HCT116 (cell line): ENCODE measurements at regions of chr6 and their contacts with region 1.

Region 1: DNA sequence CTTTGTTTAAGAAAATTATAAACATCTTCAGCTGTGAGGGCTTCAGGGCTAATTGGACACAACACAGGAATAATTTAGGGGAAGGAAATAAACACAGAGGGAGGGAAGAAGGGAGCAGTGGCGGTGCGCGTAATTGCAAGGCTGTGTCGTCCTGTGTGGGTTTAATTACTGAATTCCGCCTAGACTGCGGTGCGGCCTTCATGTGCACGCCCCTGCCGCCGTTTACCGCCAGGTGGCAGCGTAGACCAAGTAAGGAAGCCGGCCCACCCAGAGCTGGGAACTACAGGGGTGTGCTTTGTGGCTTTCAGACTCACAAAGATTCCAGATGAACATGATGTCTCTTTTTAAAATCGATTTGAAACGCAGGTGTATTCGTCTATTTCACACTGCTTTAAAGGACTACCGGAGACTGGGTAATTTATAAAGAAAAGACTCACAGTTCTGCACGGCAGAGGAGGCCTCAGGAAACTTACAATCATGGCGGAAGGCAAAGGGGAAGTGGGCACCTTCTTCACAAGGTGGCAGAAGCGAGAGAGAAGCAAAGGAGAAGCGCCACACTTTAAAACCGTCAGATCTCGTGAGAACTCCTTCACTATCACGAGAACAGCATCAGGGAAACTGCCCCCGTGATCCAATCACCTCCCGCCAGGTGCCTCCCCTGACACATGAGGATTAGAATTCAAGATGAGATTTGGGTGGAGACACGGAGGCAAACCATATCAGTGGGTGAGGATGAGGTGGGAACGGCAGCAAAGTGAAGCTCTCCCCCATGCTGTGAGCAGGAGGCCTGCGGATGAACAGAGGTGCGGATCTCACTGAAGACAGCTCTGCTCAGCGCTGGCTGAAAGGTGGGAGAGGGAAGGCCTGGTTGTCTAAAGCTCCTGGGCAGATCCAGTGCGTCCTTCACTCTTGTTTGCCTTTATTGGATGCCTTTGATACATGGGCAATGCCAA is 222.0 kb upstream of the PDE10A start:
- DNase-seq: peak; percentile 51
- ATAC-seq: peak; percentile 97
- H3K4me3 ChIP-seq: no peak overlapping the region
- H3K27ac ChIP-seq: no peak overlapping the region
- H3K4me1 ChIP-seq: peaks cover 0 to 6% of the 10 kb centered on the region in 2 experiments; a peak in 1 of 4 replicates
- H3K27me3 ChIP-seq: no peaks in the 10 kb centered on the region
- CTCF ChIP-seq: peak; percentile 79 to 92 (median 79); a peak in 5 of 6 replicates
- POLR2A ChIP-seq: no peak
- RAD21 ChIP-seq: peak; percentile 87

Region 2: GRCh38 chr6:166097915-166098522 is 212.9 kb after region 1 on chr6:
- CTCF ChIA-PET with region 1: interaction called, 24 read pairs
- POLR2A ChIA-PET with region 1: no interaction called
- RAD21 ChIA-PET with region 1: no interaction called
- intact Hi-C with region 1: loop called (anchors 1 kb)
- DNase-seq: peak; percentile 49
- ATAC-seq: peak; percentile 97
- H3K4me3 ChIP-seq: peak overlapping the region; percentile 29 to 54
- H3K27ac ChIP-seq: no peak overlapping the region
- H3K4me1 ChIP-seq: peaks cover 0 to 6% of the 10 kb centered on the region in 2 experiments; a peak in 1 of 4 replicates
- H3K27me3 ChIP-seq: no peaks in the 10 kb centered on the region
- CTCF ChIP-seq: peak; percentile 64 to 97 (median 89)
- POLR2A ChIP-seq: no peak
- RAD21 ChIP-seq: peak; percentile 66

Region 3: DNA sequence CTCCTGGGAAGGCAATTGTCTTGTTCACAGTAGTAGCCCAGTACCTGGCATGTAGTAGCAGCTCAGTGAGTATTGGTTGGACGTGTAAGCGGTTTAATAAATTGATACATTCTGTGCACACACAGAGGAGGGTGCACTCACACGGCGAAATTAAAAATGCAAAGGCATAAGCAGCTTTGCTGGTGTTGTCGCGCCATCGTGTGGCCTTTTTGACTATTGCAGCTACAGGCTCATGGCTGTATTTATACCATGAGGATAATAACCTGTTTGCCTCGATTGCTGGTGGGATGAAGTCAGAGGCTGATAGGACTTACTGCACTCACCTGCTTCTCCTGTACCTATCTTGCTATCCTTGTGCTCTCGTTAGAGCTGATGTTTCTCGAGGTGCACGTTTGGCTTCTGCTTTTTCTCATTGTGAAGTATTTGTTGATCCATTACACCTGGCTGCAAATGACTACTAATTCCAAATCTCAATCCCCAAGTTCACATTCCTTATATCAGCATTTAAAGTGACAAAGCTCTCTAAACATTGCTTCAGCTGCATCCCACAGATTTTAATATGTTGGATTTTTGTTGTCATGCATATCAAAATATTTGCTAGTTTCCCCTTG is 221.1 kb after region 1 on chr6:
- CTCF ChIA-PET with region 1: interaction called, 15 read pairs
- POLR2A ChIA-PET with region 1: no interaction called
- RAD21 ChIA-PET with region 1: interaction called in 1 of 2 experiments, 3 read pairs
- intact Hi-C with region 1: loop called (anchors 1 kb)
- DNase-seq: peak; percentile 49
- ATAC-seq: peak; percentile 92
- H3K4me3 ChIP-seq: no peak overlapping the region
- H3K27ac ChIP-seq: no peak overlapping the region
- H3K4me1 ChIP-seq: no peaks in the 10 kb centered on the region
- H3K27me3 ChIP-seq: no peaks in the 10 kb centered on the region
- CTCF ChIP-seq: peak; percentile 78 to 96 (median 83)
- POLR2A ChIP-seq: no peak
- RAD21 ChIP-seq: peak; percentile 95